Mucosa of descending colon (tissue), 3 donors: ENCODE measurements at regions of chr10 and their contacts with region 1.

Region 1: DNA sequence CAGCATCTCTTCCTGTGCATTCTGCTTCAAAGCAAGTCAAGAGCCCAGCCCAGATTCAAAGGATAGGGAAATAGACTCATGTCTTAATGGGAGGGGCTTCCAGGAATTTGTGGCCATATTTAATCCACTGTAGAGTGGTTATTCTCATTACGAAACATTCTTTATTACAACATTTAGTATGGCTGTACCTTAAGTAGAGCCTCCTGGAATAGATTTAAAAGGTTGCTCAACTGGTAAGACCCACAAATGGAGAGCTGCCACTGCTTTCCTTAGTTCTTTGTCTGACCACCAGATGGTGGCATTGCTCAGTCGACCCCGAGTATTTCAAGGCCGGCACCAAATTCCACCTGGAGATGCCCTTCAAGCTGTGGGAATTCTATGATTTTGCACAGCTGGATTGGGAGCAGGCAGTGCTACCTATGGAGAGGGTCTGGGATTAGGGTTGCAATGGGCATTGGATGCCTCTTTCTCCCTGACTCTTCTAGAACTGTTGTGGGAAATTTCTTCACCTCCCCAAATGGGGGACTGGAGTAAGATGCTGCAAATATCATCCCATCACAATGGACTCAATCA is 102.2 kb downstream of the RBM20 start:
- DNase-seq: peak in 2 of 3 donors; percentile 60 to 82
- ATAC-seq: peak; percentile 89
- H3K4me3 ChIP-seq: no peak overlapping the region
- H3K4me1 ChIP-seq: no peaks in the 10 kb centered on the region
- CTCF ChIP-seq: peak; percentile 52

Region 2: GRCh38 chr10:110803830-110804338 is 57.5 kb after region 1 on chr10:
- intact Hi-C with region 1: loop called in 1 of 2 experiments (anchors 5 kb)
- DNase-seq: peak; percentile 58 to 79 (median 72)
- ATAC-seq: peak; percentile 80
- H3K4me3 ChIP-seq: no peak overlapping the region
- H3K4me1 ChIP-seq: peaks cover 19% of the 10 kb centered on the region
- CTCF ChIP-seq: peak; percentile 27

Region 3: GRCh38 chr10:110893559-110894179 is 147.3 kb after region 1 on chr10:
- intact Hi-C with region 1: loop called (anchors 5 to 10 kb)
- DNase-seq: no peak
- ATAC-seq: peak; percentile 82
- H3K4me3 ChIP-seq: no peak overlapping the region
- H3K4me1 ChIP-seq: peaks cover 5% of the 10 kb centered on the region
- CTCF ChIP-seq: no peak